ENCODE measurements at regions of chr11 and their contacts with region 1.

Region 1: DNA sequence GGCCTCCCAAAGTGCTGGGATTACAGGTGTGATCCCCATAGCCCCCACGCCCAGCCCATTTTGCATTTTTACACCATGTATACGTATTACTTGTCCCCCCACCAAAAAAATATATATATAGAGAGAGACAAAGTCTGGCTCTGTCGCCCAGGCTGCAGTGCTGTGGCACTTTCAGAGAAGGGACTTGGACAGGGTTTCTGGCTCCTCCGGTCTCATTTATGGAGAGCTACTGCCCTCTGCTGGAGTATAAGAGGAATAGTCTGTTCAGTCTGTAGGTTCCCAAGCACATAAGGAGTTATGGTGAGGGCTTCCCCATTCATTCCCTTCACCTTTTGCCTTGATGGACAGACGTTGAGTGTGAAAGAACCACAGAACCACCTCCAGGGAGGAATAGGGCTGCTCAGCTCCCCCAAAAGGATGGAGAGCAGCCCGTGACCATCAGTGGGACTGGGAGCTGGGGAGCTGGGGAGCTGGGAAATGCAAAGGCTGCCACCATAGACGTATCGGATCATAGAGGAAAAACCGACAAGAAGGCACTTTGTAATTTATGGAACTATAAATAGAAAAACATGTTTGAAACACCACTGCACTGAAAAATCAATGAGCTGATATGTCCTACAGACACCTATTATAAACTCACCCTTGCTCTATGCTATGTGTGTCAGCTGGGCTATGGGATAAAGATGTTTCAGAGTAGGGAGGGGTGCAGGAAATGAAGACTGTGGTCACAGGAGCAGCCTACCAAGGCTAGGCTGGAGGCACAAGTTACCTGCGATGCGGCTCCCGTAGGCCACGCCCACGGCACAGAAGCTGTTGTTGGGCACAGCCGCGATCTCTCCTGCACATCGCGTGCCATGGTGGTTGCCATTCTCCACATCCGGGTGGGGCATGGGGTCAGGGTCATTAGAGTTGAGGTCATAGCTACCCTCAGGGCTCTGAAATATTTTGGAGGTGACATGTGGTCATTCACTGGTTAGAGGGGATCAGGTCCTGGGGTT is 5.2 kb downstream of the PCSK7 start:
- DNase-seq: peak; percentile 41 to 51
- H3K4me3 ChIP-seq: no peak overlapping the region
- H3K27ac ChIP-seq: no peak overlapping the region
- H3K4me1 ChIP-seq: peaks cover 10 to 21% of the 10 kb centered on the region in 2 donors
- H3K27me3 ChIP-seq: no peaks in the 10 kb centered on the region
- CTCF ChIP-seq: peak; percentile 45 to 86 (median 78)
- POLR2A ChIP-seq: no peak

Region 2: GRCh38 chr11:116791002-116791812 is 435.5 kb before region 1 on chr11:
- intact Hi-C with region 1: loop called (anchors 5 kb)
- DNase-seq: peak; percentile 79 to 82
- H3K4me3 ChIP-seq: no peak overlapping the region
- H3K27ac ChIP-seq: no peak overlapping the region
- H3K4me1 ChIP-seq: peaks cover 13 to 31% of the 10 kb centered on the region in 2 donors
- H3K27me3 ChIP-seq: no peaks in the 10 kb centered on the region
- CTCF ChIP-seq: peak; percentile 59 to 95 (median 94)
- POLR2A ChIP-seq: no peak

Region 3: DNA sequence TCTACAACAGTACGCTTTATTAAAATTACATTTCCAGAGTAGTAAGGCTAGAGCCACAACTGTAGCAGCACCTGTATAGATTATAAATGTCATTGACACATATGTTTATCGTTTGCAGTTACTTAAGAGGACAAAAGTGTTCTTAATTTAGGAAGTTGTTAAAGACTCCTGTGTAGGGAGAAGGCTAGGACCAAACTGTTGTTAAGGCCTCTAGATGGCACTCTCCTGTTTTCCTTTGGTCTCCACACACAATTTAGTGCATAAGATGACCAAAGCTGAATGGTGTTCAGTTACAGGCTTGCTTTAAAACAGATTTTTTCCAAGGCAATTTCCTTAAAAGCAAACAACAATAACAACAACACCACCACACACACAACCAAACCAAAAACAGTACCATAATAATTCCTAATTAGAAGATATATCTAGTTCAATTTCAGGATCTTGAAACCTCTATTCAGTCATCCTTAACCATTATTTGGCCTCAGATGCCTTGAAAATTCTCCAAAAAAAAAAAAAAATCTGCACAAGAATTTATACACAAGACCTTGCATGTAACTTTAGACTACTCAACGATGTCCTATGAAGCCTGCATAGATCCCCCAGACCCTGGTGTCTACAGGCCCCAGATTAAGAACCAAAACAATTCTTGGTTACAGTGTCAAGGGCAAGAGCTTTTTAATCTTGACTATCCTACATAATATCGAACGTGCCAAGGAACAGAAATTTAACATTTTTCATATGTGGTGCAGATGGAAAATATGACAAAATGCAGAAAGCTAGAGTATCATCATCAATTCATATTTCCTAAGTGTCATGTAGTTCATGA is 346.7 kb before region 1 on chr11:
- intact Hi-C with region 1: loop called (anchors 5 kb)
- DNase-seq: peak in 1 of 2 donors; percentile 12
- H3K4me3 ChIP-seq: no peak overlapping the region
- H3K27ac ChIP-seq: peak overlapping the region; percentile 4 to 33 (median 24)
- H3K4me1 ChIP-seq: peaks cover 0 to 5% of the 10 kb centered on the region in 2 donors
- H3K27me3 ChIP-seq: no peaks in the 10 kb centered on the region
- CTCF ChIP-seq: peak; percentile 50 to 84 (median 66)
- POLR2A ChIP-seq: no peak

Region 4: DNA sequence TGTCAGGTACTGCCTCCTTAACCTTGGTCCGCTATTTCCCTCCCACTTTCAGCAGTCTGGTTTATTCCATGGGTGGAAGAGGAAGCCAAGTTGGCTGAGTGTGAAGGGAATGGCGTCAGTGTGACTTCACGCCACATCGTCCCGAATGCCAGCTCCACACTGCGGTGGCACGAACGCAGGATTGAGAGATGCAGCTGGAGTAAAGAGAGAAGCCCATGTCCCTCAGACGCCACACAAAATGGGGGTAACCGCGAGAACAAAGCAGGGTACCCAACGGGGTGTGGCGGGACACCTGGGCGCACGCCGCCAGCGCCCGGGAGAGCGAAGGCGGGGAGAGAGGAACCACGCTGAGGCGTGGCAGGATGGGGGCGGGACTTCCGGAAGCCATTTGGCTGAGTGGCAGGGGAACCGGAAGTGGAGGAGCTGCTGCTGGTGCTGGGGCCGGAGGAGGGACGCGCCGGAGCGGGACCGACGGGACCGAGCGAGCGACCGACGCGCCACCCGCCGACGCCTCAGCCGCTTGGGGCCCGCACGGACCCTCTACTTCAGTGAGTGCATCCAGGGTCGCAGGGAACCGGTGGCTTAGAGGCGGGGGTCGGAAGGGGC is 82.7 kb before region 1 on chr11 and contains the start of gene PAFAH1B2:
- intact Hi-C with region 1: loop called (anchors 10 kb)
- DNase-seq: peak; percentile 96 to 97
- H3K4me3 ChIP-seq: peak within 1 kb of the TSS; percentile 69 to 91 (median 90)
- H3K27ac ChIP-seq: peak within 1 kb of the TSS; percentile 79 to 88 (median 86)
- H3K4me1 ChIP-seq: peaks cover 15 to 24% of the 10 kb centered on the region in 2 donors
- H3K27me3 ChIP-seq: no peaks in the 10 kb centered on the region
- CTCF ChIP-seq: no peak
- POLR2A ChIP-seq: peak; percentile 67 to 95
- total RNA-seq, gene PAFAH1B2: 107 to 128 (median 118) TPM

Region 5: GRCh38 chr11:117180661-117181585 is 45.8 kb before region 1 on chr11:
- intact Hi-C with region 1: loop called (anchors 5 kb)
- DNase-seq: peak; percentile 59 to 67
- H3K4me3 ChIP-seq: no peak overlapping the region
- H3K27ac ChIP-seq: no peak overlapping the region
- H3K4me1 ChIP-seq: peaks cover 17 to 32% of the 10 kb centered on the region in 2 donors
- H3K27me3 ChIP-seq: no peaks in the 10 kb centered on the region
- CTCF ChIP-seq: peak in 4 of 6 experiments; percentile 31 to 54 (median 51)
- POLR2A ChIP-seq: no peak

Measured in thyroid gland (tissue), 4 donors.